CD8-positive, alpha-beta T cell (primary cell): ENCODE measurements at regions of chr5 and their contacts with region 1.

Region 1: DNA sequence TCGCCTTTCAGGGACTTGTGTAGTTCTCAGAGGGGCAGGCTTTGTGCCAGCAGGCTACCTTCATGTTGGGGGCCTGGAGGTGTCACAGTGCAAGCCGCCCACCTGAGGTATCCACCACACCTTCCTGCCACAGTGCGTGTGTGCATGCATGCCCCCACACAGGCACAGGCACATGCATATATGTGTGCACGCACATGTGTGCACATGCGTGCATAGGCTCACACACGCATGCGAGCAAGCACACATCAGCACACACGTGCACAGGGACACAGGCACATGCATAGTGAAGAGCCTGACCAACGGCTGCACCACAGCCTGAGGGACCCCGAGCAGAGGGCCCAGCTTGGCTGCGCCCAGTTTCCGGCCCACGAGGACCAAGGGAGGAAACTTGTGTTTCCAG is 36.1 kb downstream of the IRX4 start:
- DNase-seq: no peak
- ATAC-seq: no peak
- H3K4me3 ChIP-seq: no peak overlapping the region
- H3K4me3 Mint-ChIP-seq: no peak overlapping the region
- H3K27ac ChIP-seq: no peak overlapping the region
- H3K27ac Mint-ChIP-seq: no peak overlapping the region
- H3K4me1 ChIP-seq: no peaks in the 10 kb centered on the region
- H3K4me1 Mint-ChIP-seq: no peaks in the 10 kb centered on the region
- H3K27me3 ChIP-seq: peaks cover 0 to 2% of the 10 kb centered on the region in 2 experiments
- H3K27me3 Mint-ChIP-seq: peaks cover 27% of the 10 kb centered on the region
- CTCF ChIP-seq: no peak

Region 2: DNA sequence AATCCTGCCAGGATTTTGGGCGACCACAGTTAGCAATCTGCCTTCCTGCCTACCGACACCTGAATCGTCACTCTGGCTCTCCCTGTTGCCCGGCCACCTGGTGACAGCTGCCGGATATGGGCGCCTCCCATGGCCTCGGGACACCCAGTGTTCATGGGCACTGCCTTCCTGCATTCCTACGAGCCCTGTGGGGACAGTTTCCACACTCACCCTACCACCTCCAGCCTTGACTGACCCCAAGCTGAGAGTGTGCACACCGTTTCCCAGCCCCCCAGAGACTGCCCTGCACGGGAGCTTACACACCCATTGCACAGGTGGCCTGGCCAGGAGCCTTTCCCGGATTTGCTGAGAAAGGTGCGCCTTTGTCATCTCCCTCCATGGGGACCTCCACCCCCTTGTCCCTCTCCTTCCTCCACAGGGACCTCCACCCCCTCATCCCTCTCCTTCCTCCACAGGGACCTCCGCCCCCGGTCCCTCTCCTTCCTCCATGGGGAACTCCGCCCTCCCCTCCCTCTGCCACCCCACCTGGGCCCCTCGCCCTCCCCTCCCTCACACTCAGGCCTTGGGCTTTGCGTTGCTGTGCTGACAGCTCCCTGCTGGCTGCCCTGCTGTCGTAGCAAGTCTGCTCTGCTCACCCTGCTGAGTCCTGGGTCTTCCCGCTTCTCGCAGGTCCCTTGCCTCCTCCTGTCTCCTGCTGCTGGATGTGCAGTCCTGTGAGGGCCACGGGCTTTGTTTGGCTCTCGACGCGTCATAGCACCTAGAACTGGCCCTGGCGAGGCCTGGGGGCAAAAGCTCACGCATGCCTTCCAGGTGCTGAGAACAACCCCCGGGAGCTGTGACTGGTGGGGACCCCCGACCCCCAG is 95.3 kb before region 1 on chr5:
- CTCF ChIA-PET with region 1: no interaction called
- POLR2A ChIA-PET with region 1: no interaction called
- intact Hi-C with region 1: loop called in 1 of 2 experiments (anchors 5 kb)
- DNase-seq: no peak
- ATAC-seq: no peak
- H3K4me3 ChIP-seq: no peak overlapping the region
- H3K4me3 Mint-ChIP-seq: no peak overlapping the region
- H3K27ac ChIP-seq: no peak overlapping the region
- H3K27ac Mint-ChIP-seq: no peak overlapping the region
- H3K4me1 ChIP-seq: no peaks in the 10 kb centered on the region
- H3K4me1 Mint-ChIP-seq: no peaks in the 10 kb centered on the region
- H3K27me3 ChIP-seq: no peaks in the 10 kb centered on the region
- H3K27me3 Mint-ChIP-seq: no peaks in the 10 kb centered on the region
- CTCF ChIP-seq: no peak